Activated T-helper 1 cell treated with anti-CD3 and anti-CD28 coated beads, Interleukin-12 subunit alpha, Interleukin-12 subunit beta, Interleukin-2, Interleukin-4 antibody, amounts not matched to agents 30 ng/mL and 10 ng/mL and 1 ng/mL, durations not matched to agents 14 hours and 24 hours and 36 hours (primary cell): ENCODE measurements at regions of chr11 and their contacts with region 1.

Region 1: DNA sequence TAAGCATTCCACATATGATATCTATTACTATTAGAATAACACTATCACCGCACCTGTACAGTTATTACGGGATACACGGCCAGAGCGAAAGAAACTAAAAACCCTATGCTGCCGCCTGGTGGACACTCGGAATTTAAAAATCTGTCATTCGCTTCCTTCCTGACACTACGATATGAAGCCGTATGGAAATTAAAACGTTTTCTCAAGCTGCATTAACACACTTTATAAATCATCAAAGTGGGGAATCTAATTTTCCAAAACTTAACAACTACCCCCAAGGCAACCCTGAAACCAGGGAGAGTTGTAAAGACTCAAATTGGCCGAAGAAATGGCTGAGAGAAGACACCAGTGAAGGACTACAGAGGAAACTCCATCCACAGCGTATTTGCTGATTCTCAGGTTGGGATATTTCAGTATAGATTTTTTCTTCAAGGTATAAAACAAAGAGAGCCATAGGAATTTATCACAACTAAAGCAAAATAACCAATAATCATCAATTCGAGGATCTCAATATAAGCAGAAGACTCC is 1.4 kb downstream of the CCDC73 start:
- DNase-seq: peak; percentile 30
- H3K4me3 Mint-ChIP-seq: no peak overlapping the region
- H3K27ac Mint-ChIP-seq: no peak overlapping the region
- H3K4me1 Mint-ChIP-seq: peaks cover 6% of the 10 kb centered on the region
- H3K27me3 Mint-ChIP-seq: peaks cover 21% of the 10 kb centered on the region

Region 2: DNA sequence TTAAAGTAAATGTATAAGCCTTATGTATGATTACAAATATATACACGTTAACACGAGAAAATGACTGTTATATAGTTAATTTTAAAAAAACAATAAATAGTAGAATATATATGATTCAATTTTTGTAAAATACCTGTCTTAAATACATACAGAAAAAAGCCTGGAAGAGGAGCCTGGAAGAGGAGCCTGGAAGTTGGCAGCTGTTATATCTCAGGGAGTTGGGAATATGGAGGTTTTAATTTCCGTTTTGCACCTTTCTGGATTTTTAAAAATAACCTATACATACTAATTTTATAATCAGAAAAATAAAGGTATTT is 469.2 kb before region 1 on chr11:
- intact Hi-C with region 1: loop called (anchors 1 kb)
- DNase-seq: no peak
- H3K4me3 Mint-ChIP-seq: no peak overlapping the region
- H3K27ac Mint-ChIP-seq: no peak overlapping the region
- H3K4me1 Mint-ChIP-seq: no peaks in the 10 kb centered on the region
- H3K27me3 Mint-ChIP-seq: peaks cover 8% of the 10 kb centered on the region

Region 3: DNA sequence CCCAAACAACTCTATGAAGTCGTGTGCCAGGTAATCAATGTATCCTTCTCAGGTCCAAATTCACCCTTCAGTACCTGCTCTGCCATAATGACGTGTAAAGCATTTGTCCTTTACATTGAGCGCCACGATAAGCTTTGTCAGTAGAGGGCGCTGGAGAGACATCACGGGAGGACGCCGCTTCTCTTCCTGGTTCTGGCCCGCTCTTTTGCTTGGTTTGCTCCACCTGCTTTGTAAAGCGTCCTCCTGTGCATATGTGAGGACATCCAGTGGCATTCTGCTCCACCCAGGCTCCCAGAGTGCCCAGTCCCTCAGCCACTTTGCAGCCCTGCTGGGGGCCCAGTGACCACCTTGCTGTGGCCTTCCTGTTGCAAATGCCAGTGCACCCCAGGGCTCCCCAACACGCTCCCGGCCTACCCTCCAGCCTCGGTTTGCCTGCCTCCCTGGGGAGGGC is 418.7 kb before region 1 on chr11:
- intact Hi-C with region 1: loop called (anchors 1 kb)
- DNase-seq: peak; percentile 3
- H3K4me3 Mint-ChIP-seq: no peak overlapping the region
- H3K27ac Mint-ChIP-seq: no peak overlapping the region
- H3K4me1 Mint-ChIP-seq: no peaks in the 10 kb centered on the region
- H3K27me3 Mint-ChIP-seq: peaks cover 4% of the 10 kb centered on the region

Region 4: DNA sequence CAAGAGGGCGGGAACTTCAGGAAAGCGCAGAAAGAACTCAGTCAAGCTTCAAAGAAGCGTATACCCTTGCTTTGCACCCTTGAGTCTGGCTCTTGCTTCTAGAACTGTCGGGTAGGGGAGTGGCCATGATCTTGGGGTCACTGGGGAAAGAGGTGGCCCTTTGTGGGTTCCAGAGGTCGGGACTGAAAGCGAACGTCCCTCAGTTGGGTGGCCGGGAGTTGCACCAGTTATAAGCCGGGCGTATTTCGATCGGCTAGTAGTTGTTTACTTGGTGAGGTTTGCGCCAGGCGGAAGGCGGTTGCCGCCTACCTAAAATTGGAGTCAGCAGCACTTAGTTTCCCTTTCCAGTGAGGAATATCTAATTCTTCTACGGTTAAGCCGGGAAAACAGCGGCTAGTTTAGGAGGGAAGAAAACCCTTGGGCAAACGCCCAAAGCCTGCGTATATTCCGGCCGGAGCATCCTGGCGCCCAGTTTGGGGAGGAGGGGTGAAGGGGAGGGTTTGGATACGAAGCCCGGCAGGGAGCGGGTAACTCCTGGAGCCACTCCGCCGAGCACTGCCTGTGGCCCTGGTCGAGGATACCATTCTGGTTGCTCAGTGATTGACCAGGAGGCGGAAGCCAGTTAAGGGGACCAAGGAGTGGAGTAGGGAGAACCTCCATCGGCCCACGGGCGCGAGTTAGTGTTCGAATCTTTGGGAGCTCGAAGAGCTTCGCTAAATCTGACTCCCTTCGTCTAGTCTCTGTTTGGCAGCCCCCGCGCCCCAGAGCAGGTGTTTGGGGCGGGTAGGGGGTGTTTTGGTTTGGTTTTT is 356.9 kb before region 1 on chr11:
- intact Hi-C with region 1: loop called (anchors 5 kb)
- DNase-seq: no peak
- H3K4me3 Mint-ChIP-seq: no peak overlapping the region
- H3K27ac Mint-ChIP-seq: peak overlapping the region; percentile 61
- H3K4me1 Mint-ChIP-seq: peaks cover 5% of the 10 kb centered on the region
- H3K27me3 Mint-ChIP-seq: peaks cover 73% of the 10 kb centered on the region

Region 5: GRCh38 chr11:32713496-32713895 is 79.5 kb before region 1 on chr11:
- intact Hi-C with region 1: loop called (anchors 1 kb)
- DNase-seq: no peak
- H3K4me3 Mint-ChIP-seq: no peak overlapping the region
- H3K27ac Mint-ChIP-seq: no peak overlapping the region
- H3K4me1 Mint-ChIP-seq: no peaks in the 10 kb centered on the region
- H3K27me3 Mint-ChIP-seq: peaks cover 7% of the 10 kb centered on the region

Region 6: DNA sequence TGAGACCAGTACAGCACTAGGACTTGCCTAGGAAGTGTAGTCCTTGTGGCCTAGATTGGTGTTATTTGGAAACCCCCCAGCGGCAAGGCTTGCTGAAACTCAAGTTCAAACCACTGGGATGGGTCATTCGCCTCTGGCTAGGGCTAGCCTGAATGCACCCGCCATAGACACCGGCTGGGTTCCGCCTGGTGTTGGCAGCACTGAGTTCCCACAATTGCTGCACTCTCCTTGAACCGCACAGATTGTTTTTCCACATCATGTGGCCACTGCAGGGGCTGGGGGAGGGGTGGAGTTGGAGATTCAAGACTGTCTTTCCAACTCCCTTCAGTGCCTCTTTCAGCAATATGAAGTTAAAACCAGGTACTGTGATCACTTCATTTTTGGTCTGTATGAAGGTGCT is 41.6 kb before region 1 on chr11:
- intact Hi-C with region 1: loop called (anchors 2 kb)
- DNase-seq: no peak
- H3K4me3 Mint-ChIP-seq: no peak overlapping the region
- H3K27ac Mint-ChIP-seq: no peak overlapping the region
- H3K4me1 Mint-ChIP-seq: no peaks in the 10 kb centered on the region
- H3K27me3 Mint-ChIP-seq: peaks cover 6% of the 10 kb centered on the region